HepG2 (cell line): ENCODE measurements at regions of chr16 and their contacts with region 1.

Region 1: DNA sequence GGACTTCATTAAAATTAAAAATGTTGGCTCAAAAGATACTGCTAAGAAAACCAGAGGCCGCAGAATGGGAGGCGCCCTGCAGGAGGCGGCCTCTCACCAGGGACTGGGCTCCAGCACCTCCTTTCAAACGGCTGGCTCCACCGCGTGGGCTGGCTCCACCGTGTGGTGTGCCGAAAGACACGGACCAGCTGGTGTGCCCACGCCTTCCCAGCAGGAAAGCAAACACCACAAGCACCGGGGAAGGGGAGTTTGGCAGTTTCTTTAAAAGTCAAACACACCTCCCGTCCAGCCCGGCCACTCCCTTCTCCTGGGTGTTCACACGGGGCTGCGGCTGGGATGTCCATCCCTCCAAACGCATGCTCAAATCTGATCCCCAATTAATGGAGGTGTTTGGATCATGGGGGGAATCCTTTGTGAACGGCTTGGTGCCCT is 13.9 kb downstream of the HAGH start:
- DNase-seq: peak; percentile 70
- ATAC-seq: peak; percentile 93
- H3K4me3 ChIP-seq: no peak overlapping the region
- H3K27ac ChIP-seq: no peak overlapping the region
- H3K4me1 ChIP-seq: peaks cover 10% of the 10 kb centered on the region
- H3K27me3 ChIP-seq: no peaks in the 10 kb centered on the region
- CTCF ChIP-seq: peak; percentile 91
- EP300 ChIP-seq: no peak
- POLR2A ChIP-seq: no peak
- RAD21 ChIP-seq: peak; percentile 95

Region 2: DNA sequence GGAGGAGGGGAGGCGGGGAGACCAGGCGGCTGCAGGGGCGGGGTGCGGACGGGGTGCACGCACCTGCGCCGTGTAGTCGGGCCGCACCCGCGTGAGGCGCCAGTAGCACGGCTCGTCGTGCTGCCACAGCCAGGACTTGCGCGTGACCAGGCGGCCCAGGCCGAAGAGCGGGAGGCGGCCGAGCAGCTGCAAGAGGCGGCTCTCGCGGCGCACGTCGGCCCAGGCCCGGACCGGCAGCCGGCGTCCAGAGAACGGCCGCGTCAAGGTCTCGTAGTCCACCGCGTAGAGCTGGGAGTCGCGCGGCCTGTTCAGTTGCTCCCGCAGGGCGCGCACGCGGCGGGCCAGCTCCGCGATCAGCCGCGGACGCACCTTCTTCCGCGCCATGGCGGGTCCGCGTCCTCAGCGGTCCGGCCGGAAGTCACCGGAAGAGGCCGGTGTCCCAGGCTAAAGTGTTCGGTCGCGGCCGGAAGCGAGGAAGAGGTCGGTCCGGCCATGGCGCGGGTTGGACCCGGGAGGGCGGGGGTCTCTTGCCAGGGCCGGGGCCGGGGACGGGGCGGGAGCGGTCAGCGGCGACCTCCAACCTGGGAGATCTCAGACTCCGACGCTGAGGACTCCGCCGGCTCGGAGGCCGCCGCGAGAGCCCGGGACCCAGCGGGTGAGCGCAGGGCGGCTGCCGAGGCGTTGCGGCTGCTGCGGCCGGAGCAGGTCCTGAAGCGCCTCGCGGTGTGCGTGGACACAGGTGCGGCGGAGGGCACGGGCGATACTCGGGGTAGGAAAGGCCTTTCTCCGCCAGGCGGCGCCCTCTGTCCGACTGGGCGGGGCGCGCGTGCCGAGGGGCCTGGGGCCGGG is 39.8 kb before region 1 on chr16 and contains the starts of genes EME2 and MRPS34:
- CTCF ChIA-PET with region 1: interaction called, 11 read pairs
- POLR2A ChIA-PET with region 1: no interaction called
- in situ Hi-C with region 1: no loop called
- intact Hi-C with region 1: loop called (anchors 5 kb)
- DNase-seq: peak; percentile 78
- ATAC-seq: peak; percentile 70
- H3K4me3 ChIP-seq: peak within 1 kb of the TSS; percentile 94 to 96 (median 95)
- H3K27ac ChIP-seq: peak within 1 kb of the TSS; percentile 90
- H3K4me1 ChIP-seq: peaks cover 12% of the 10 kb centered on the region
- H3K27me3 ChIP-seq: no peaks in the 10 kb centered on the region; a peak in 2 of 5 replicates
- CTCF ChIP-seq: peak; percentile 91
- EP300 ChIP-seq: peak in 1 of 2 experiments; percentile 21; a peak in 1 of 4 replicates
- POLR2A ChIP-seq: peak; percentile 73 to 86
- RAD21 ChIP-seq: peak; percentile 87
- total RNA-seq, gene EME2: 1.7 and 7.6 TPM in 2 replicates
- total RNA-seq, gene MRPS34: 129 and 131 TPM in 2 replicates

Region 3: DNA sequence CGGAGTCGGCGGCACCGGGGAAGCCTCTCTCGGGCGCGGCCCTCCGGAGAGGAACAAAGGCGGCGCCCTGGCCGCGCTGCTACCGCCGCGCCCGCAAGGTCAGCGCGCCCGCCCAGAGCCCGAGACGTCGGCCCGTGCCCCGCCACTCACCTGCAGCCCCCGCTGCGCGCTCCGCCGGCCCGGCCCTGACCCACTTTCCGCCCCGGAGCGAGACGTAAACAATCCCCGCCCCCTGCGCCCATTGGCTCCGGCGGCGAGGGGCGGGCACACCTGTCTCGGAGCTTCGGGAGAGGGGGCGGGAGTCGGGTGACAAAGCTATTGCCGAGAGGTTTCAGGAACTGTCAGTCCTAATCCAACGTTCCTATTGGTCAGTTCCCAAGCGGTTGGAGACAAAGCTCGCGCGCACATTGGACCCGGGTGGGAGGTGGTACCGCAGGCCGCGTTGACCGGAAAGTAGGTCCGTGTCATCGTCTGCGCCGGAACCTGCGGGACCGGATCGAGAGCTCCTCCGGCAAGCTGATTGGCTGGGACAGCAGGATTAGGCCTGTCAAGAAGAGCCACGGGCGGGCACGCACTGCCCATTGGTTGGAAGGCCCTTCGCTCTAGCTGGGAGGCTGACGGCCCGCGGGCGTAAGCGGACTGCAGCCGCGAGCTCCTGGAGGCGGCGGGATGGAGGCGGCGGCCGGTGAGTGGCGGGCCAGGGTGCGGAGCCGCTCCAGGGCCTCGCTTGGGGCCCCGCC is 30.2 kb before region 1 on chr16 and contains the starts of genes NUBP2 and SPSB3:
- CTCF ChIA-PET with region 1: interaction called, 8 read pairs
- POLR2A ChIA-PET with region 1: interaction called, 11 read pairs
- in situ Hi-C with region 1: no loop called
- intact Hi-C with region 1: loop called (anchors 2 kb)
- DNase-seq: peak; percentile 99
- ATAC-seq: peak; percentile 90
- H3K4me3 ChIP-seq: peak within 1 kb of the TSS; percentile 94 to 96 (median 94)
- H3K27ac ChIP-seq: peak within 1 kb of the TSS; percentile 70
- H3K4me1 ChIP-seq: peaks cover 22% of the 10 kb centered on the region
- H3K27me3 ChIP-seq: peaks cover 0 to 2% of the 10 kb centered on the region in 2 experiments; a peak in 1 of 5 replicates
- CTCF ChIP-seq: no peak
- EP300 ChIP-seq: no peak
- POLR2A ChIP-seq: peak; percentile 41 to 74; a peak in 3 of 4 replicates
- RAD21 ChIP-seq: no peak; the same call in 1 of the 2 replicates
- total RNA-seq, gene NUBP2: 43.8 and 61.5 TPM in 2 replicates
- total RNA-seq, gene SPSB3: 8.2 and 13.2 TPM in 2 replicates

Region 4: GRCh38 chr16:1794221-1794860 is 18.4 kb before region 1 on chr16:
- CTCF ChIA-PET with region 1: interaction called, 4 read pairs
- POLR2A ChIA-PET with region 1: interaction called, 4 read pairs
- in situ Hi-C with region 1: no loop called
- intact Hi-C with region 1: loop called (anchors 1 kb)
- DNase-seq: peak; percentile 85
- ATAC-seq: peak; percentile 91
- H3K4me3 ChIP-seq: peak overlapping the region; percentile 53 to 75 (median 59)
- H3K27ac ChIP-seq: peak overlapping the region; percentile 65
- H3K4me1 ChIP-seq: peaks cover 25% of the 10 kb centered on the region
- H3K27me3 ChIP-seq: no peaks in the 10 kb centered on the region
- CTCF ChIP-seq: 0 out of 2 replicates have a peak, but pooled peaks have one; percentile 26
- EP300 ChIP-seq: peak in 1 of 2 experiments; percentile 49; a peak in 1 of 4 replicates
- POLR2A ChIP-seq: peak in 1 of 2 experiments; percentile 61; a peak in 1 of 4 replicates
- RAD21 ChIP-seq: peak; percentile 42; the same call in 1 of the 2 replicates

Region 5: GRCh38 chr16:1826691-1827575 is 14.2 kb after region 1 on chr16 and contains the starts of genes FAHD1 and HAGH:
- CTCF ChIA-PET with region 1: interaction called, 11 read pairs
- POLR2A ChIA-PET with region 1: interaction called, 4 read pairs
- in situ Hi-C with region 1: no loop called
- intact Hi-C with region 1: no loop called
- DNase-seq: peak; percentile 88
- ATAC-seq: peak; percentile 77
- H3K4me3 ChIP-seq: peak within 1 kb of the TSS; percentile 72 to 97 (median 92)
- H3K27ac ChIP-seq: peak within 1 kb of the TSS; percentile 93
- H3K4me1 ChIP-seq: peaks cover 54% of the 10 kb centered on the region
- H3K27me3 ChIP-seq: no peaks in the 10 kb centered on the region; a peak in 1 of 5 replicates
- CTCF ChIP-seq: 0 out of 2 replicates have a peak, but pooled peaks have one; percentile 3
- EP300 ChIP-seq: peak; percentile 35 to 36; a peak in 2 of 4 replicates
- POLR2A ChIP-seq: peak; percentile 84 to 90
- RAD21 ChIP-seq: no peak; the same call in none of the 2 replicates
- total RNA-seq, gene FAHD1: 45.3 and 55.1 TPM in 2 replicates
- total RNA-seq, gene HAGH: 55.6 and 70.4 TPM in 2 replicates